CD4-positive, alpha-beta memory T cell (primary cell): ENCODE measurements at regions of chr6 and their contacts with region 1.

Region 1: GRCh38 chr6:43667245-43668150 is 20.1 kb downstream of the MRPS18A start:
- DNase-seq: peak; percentile 72 to 80 (median 73)
- H3K4me3 ChIP-seq: no peak overlapping the region
- H3K4me3 Mint-ChIP-seq: peak overlapping the region in 6 of 8 donors; percentile 46 to 78 (median 64)
- H3K27ac ChIP-seq: no peak overlapping the region
- H3K27ac Mint-ChIP-seq: peak overlapping the region in 4 of 7 donors; percentile 15 to 86 (median 52)
- H3K4me1 ChIP-seq: peaks cover 26% of the 10 kb centered on the region
- H3K4me1 Mint-ChIP-seq: peaks cover 11 to 19% (median 15%) of the 10 kb centered on the region in 4 donors
- H3K27me3 ChIP-seq: no peaks in the 10 kb centered on the region
- H3K27me3 Mint-ChIP-seq: no peaks in the 10 kb centered on the region

Region 2: GRCh38 chr6:43608310-43608763 is 59.2 kb before region 1 on chr6:
- CTCF ChIA-PET with region 1: interaction called, 26 read pairs
- POLR2A ChIA-PET with region 1: no interaction called
- intact Hi-C with region 1: no loop called
- DNase-seq: peak; percentile 36 to 60 (median 49)
- H3K4me3 ChIP-seq: no peak overlapping the region
- H3K4me3 Mint-ChIP-seq: no peak overlapping the region
- H3K27ac ChIP-seq: no peak overlapping the region
- H3K27ac Mint-ChIP-seq: peak overlapping the region in 6 of 7 donors; percentile 1 to 78 (median 26)
- H3K4me1 ChIP-seq: no peaks in the 10 kb centered on the region
- H3K4me1 Mint-ChIP-seq: peaks cover 3 to 7% (median 6%) of the 10 kb centered on the region in 4 donors
- H3K27me3 ChIP-seq: no peaks in the 10 kb centered on the region
- H3K27me3 Mint-ChIP-seq: no peaks in the 10 kb centered on the region

Region 3: DNA sequence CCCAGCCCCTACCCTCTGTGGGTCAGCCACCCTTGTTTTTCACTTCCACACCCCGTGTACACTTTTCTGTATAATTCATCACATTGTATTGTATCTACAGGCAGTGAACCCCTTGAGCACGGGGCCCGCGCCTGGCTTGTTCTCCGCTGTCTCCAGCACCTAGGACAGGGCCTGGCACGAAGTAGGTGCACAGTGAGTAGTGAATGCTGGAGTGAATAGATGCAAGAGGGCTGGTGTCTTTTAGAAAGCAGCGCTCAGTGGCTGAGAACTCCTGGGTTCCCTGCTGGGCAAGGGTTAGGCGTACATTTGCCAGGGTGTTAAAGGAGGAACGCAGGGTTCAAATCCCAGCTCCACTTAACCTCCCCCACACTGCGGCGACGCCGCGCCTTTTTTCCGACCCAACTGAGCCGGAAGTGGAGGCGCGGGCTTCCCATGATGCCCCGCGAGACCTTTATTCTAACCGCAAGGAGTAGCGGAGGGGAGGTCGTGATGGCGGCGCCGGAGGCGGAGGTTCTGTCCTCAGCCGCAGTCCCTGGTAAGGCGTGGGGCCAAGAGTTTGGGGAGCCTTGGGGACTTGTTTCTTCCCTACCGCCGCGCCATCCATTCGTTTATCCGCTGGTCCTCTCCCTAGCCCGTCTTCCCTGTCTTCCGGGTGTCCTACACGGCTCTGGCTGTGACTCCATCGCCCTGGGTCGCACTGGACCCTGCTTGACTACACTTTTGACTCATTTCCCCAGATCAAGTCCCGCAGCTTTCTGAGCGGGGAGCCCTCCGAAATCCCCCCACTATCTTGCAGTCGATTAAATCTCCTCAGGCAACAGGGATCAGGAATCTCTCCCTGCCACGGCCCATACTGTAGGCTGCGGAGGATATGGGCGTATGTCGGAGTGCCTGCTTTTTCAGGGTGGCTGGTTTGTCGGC is 31.9 kb before region 1 on chr6 and contains the start of gene MAD2L1BP:
- CTCF ChIA-PET with region 1: interaction called, 17 read pairs
- POLR2A ChIA-PET with region 1: interaction called, 5 read pairs
- intact Hi-C with region 1: no loop called
- DNase-seq: peak; percentile 85 to 89 (median 87)
- H3K4me3 ChIP-seq: peak within 1 kb of the TSS; percentile 66 to 94
- H3K4me3 Mint-ChIP-seq: peak within 1 kb of the TSS; percentile 93 to 100 (median 99)
- H3K27ac ChIP-seq: peak within 1 kb of the TSS; percentile 84
- H3K27ac Mint-ChIP-seq: peak within 1 kb of the TSS; percentile 96 to 98 (median 97)
- H3K4me1 ChIP-seq: peaks cover 49% of the 10 kb centered on the region
- H3K4me1 Mint-ChIP-seq: peaks cover 26 to 62% (median 41%) of the 10 kb centered on the region in 4 donors
- H3K27me3 ChIP-seq: no peaks in the 10 kb centered on the region
- H3K27me3 Mint-ChIP-seq: no peaks in the 10 kb centered on the region
- total RNA-seq, gene MAD2L1BP: 31.7 to 33.0 TPM

Region 4: GRCh38 chr6:43679057-43679456 is 11.6 kb after region 1 on chr6:
- CTCF ChIA-PET with region 1: interaction called, 17 read pairs
- POLR2A ChIA-PET with region 1: no interaction called
- intact Hi-C with region 1: no loop called
- DNase-seq: no peak
- H3K4me3 ChIP-seq: no peak overlapping the region
- H3K4me3 Mint-ChIP-seq: no peak overlapping the region
- H3K27ac ChIP-seq: no peak overlapping the region
- H3K27ac Mint-ChIP-seq: no peak overlapping the region
- H3K4me1 ChIP-seq: no peaks in the 10 kb centered on the region
- H3K4me1 Mint-ChIP-seq: peaks cover 10 to 30% (median 18%) of the 10 kb centered on the region in 4 donors
- H3K27me3 ChIP-seq: no peaks in the 10 kb centered on the region
- H3K27me3 Mint-ChIP-seq: no peaks in the 10 kb centered on the region

Region 5: DNA sequence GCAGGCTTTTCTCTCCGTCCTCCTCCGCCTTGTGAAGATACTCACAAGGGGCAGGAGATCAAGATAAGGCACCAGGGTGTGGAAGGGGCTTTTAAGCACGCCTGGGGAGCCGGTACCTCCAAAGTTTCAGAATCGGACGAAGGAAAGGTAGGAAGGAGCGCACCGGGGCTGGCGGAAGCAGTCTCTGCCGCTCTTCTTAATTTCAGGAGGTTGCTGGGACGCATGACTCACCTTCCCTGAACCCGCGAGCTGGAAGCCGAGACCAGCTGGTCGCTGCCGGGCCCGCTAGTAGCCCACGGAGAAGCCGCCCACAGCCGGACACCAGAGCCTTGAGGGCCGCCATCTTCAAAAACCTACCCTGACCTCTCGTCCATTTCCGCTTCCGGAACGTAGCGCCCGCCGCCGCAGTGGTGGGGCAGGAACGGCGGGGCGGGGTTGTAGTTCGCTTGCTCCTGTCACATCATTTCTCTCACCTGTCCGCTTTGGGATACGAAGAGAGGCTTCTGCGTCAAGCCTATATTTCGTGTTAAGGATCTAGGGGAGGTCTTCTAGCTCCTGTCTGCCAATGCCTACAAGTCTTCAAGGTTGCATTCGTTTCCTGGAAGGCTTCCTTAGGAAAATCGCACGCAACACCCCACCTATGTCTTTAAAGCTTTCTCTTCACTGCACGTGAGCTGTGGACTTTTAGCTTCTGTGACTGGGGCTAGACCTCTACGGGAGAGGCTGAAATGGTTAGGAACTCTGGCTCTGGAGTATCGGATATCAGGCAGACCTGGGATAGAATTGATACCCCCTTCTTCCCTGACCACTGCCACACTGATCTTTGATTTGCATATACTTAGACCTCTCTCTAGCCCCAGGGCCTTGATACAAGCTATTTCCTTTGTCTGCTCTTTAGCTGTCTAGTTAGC is 20.2 kb after region 1 on chr6 and contains the start of gene MRPS18A:
- CTCF ChIA-PET with region 1: interaction called, 46 read pairs
- POLR2A ChIA-PET with region 1: interaction called, 3 read pairs
- intact Hi-C with region 1: no loop called
- DNase-seq: peak; percentile 74 to 82 (median 77)
- H3K4me3 ChIP-seq: peak within 1 kb of the TSS; percentile 67 to 84
- H3K4me3 Mint-ChIP-seq: peak within 1 kb of the TSS; percentile 95 to 98 (median 96)
- H3K27ac ChIP-seq: peak within 1 kb of the TSS; percentile 77
- H3K27ac Mint-ChIP-seq: peak within 1 kb of the TSS; percentile 78 to 97 (median 93)
- H3K4me1 ChIP-seq: peaks cover 24% of the 10 kb centered on the region
- H3K4me1 Mint-ChIP-seq: peaks cover 31 to 53% (median 44%) of the 10 kb centered on the region in 4 donors
- H3K27me3 ChIP-seq: no peaks in the 10 kb centered on the region
- H3K27me3 Mint-ChIP-seq: no peaks in the 10 kb centered on the region
- total RNA-seq, gene MRPS18A: 31.3 to 32.4 TPM

Region 6: DNA sequence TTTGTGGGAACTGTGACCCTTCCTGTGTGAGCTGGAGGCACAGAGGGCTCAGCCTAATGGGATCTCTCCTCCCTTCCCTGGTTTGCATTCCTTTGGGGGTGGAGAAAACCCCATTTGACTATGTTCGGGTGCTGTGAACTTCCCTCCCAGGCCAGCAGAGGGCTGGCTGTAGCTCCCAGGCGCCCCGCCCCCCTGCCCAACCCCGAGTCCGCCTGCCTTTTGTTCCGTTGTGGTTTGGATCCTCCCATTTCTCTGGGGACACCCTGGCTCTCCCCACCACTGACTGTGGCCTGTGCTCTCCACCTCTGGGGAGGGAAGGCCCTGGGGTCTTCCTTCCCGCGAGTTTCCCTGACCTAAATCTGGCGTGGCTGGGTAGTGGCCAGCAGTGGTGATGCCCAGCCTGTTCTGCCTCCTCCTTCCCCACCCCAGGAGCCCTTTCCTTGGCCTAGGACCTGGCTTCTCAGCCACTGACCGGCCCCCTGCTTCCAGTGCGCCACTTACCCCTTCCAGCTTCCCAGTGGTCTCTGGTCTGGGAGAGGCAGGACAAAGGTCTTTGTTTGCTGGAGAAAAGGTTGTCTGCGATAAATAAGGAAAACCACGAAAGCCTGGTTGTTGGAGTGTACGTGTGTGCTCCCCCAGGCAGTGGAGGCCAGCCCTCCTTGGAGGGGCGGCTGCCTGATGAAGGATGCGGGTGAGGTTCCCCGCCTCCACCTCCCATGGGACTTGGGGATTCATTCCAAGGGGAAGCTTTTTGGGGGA is 107.5 kb after region 1 on chr6:
- CTCF ChIA-PET with region 1: interaction called, 14 read pairs
- POLR2A ChIA-PET with region 1: interaction called, 3 read pairs
- intact Hi-C with region 1: loop called (anchors 2 kb)
- DNase-seq: peak; percentile 38 to 67 (median 45)
- H3K4me3 ChIP-seq: no peak overlapping the region
- H3K4me3 Mint-ChIP-seq: peak overlapping the region in 3 of 8 donors; percentile 3 to 67 (median 43)
- H3K27ac ChIP-seq: no peak overlapping the region
- H3K27ac Mint-ChIP-seq: peak overlapping the region in 1 of 7 donors; percentile 48
- H3K4me1 ChIP-seq: peaks cover 17% of the 10 kb centered on the region
- H3K4me1 Mint-ChIP-seq: peaks cover 6 to 34% (median 19%) of the 10 kb centered on the region in 4 donors
- H3K27me3 ChIP-seq: peaks cover 5% of the 10 kb centered on the region
- H3K27me3 Mint-ChIP-seq: peaks cover 15% of the 10 kb centered on the region in 2 donors

Region 7: GRCh38 chr6:44074439-44075136 is 407.1 kb after region 1 on chr6:
- CTCF ChIA-PET with region 1: interaction called, 79 read pairs
- POLR2A ChIA-PET with region 1: no interaction called
- intact Hi-C with region 1: loop called (anchors 1 kb)
- DNase-seq: peak; percentile 60 to 68 (median 63)
- H3K4me3 ChIP-seq: peak overlapping the region in 1 of 2 donors; percentile 14
- H3K4me3 Mint-ChIP-seq: peak overlapping the region; percentile 71 to 91 (median 88)
- H3K27ac ChIP-seq: no peak overlapping the region
- H3K27ac Mint-ChIP-seq: peak overlapping the region in 5 of 7 donors; percentile 20 to 58 (median 43)
- H3K4me1 ChIP-seq: peaks cover 20% of the 10 kb centered on the region
- H3K4me1 Mint-ChIP-seq: peaks cover 15 to 26% (median 18%) of the 10 kb centered on the region in 4 donors
- H3K27me3 ChIP-seq: no peaks in the 10 kb centered on the region
- H3K27me3 Mint-ChIP-seq: peaks cover 10 to 13% of the 10 kb centered on the region in 2 donors